CD8-positive, alpha-beta T cell (primary cell): ENCODE measurements at regions of chr5 and their contacts with region 1.

Region 1: DNA sequence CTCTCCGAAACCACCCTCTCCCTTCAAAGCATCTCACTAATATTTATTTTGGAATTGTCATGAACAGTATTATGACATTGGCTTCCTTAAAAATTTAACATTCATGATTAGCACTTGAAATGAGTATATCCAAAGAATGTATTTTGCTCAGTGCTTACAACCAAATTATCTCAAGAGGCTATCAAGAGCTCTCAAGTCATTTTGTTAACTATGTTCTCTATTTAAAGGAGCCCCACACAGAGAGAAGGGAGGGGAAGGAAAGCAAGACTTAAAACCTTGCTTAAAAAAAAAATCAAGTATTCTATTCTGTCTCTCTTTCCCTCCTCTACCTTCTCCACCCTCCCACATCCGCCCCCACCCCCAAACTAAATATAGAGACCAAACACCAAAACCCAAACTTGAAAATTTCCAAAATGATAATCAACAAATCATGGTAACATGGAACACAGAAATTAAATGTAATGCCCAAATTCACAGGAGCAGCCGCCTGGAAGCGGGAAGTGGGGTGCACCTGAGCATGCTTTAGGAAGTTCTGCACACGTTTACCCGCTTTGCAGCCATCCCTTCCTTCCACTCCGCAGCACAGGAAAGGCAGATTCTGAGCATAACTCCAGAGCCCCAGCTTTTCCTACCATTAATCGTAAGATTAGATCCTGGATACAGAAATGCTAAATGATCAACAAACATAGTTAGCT is 66.9 kb downstream of the EBF1 start:
- DNase-seq: no peak
- ATAC-seq: no peak
- H3K4me3 ChIP-seq: no peak overlapping the region
- H3K4me3 Mint-ChIP-seq: no peak overlapping the region
- H3K27ac ChIP-seq: no peak overlapping the region
- H3K27ac Mint-ChIP-seq: no peak overlapping the region
- H3K4me1 ChIP-seq: no peaks in the 10 kb centered on the region
- H3K4me1 Mint-ChIP-seq: peaks cover 7% of the 10 kb centered on the region
- H3K27me3 ChIP-seq: no peaks in the 10 kb centered on the region
- H3K27me3 Mint-ChIP-seq: peaks cover 18% of the 10 kb centered on the region
- CTCF ChIP-seq: no peak

Region 2: DNA sequence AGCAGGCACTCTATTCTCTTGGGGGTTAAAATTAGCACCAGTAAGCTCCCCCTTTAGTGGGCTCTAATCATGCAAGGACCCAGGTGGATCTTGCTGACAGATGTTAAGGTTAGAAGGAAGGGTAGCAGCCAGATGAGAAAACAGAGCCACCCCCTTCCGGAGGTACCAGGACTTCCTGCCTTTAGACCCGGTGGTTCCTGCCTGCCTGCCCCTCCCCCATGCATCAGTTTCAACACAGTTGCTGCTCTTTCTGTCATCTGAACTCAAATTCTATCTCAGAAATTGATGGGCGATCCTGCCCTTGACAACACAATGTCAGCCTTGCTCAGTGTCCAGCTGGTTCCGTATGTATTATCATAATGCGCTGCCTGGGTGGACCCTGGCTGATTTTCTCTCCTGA is 220.4 kb before region 1 on chr5:
- CTCF ChIA-PET with region 1: no interaction called
- POLR2A ChIA-PET with region 1: no interaction called
- intact Hi-C with region 1: no loop called
- DNase-seq: peak; percentile 18 to 79 (median 50)
- ATAC-seq: peak; percentile 87
- H3K4me3 ChIP-seq: peak overlapping the region in 1 of 2 experiments; percentile 11
- H3K4me3 Mint-ChIP-seq: peak overlapping the region; percentile 61
- H3K27ac ChIP-seq: peak overlapping the region in 1 of 2 experiments; percentile 31
- H3K27ac Mint-ChIP-seq: peak overlapping the region; percentile 61
- H3K4me1 ChIP-seq: peaks cover 22% of the 10 kb centered on the region
- H3K4me1 Mint-ChIP-seq: peaks cover 43% of the 10 kb centered on the region
- H3K27me3 ChIP-seq: no peaks in the 10 kb centered on the region
- H3K27me3 Mint-ChIP-seq: no peaks in the 10 kb centered on the region
- CTCF ChIP-seq: no peak

Region 3: DNA sequence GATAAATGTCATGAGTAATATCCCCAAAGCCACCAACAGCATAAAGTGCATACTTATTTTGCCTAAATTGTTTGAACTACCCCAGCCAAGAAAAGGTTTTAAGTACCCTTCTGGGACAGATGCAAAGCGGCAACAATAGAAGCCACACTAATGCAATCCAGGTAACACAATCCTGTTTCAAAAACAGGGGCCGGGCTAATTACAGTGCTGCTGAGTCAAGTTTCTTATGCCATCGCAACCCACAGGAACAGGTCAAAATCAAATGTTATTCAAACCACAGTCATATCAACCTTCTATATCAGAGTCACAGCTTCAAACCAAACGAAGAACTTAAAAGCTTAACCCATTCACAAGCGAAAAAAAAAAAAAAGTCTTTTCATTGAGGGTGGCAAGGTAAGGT is 38.6 kb after region 1 on chr5:
- CTCF ChIA-PET with region 1: no interaction called
- POLR2A ChIA-PET with region 1: no interaction called
- intact Hi-C with region 1: loop called in 1 of 2 experiments (anchors 1 kb)
- DNase-seq: no peak
- ATAC-seq: no peak
- H3K4me3 ChIP-seq: no peak overlapping the region
- H3K4me3 Mint-ChIP-seq: no peak overlapping the region
- H3K27ac ChIP-seq: no peak overlapping the region
- H3K27ac Mint-ChIP-seq: no peak overlapping the region
- H3K4me1 ChIP-seq: no peaks in the 10 kb centered on the region
- H3K4me1 Mint-ChIP-seq: peaks cover 5% of the 10 kb centered on the region
- H3K27me3 ChIP-seq: no peaks in the 10 kb centered on the region
- H3K27me3 Mint-ChIP-seq: peaks cover 10% of the 10 kb centered on the region
- CTCF ChIP-seq: no peak

Region 4: GRCh38 chr5:159341914-159342313 is 309.1 kb after region 1 on chr5:
- CTCF ChIA-PET with region 1: no interaction called
- POLR2A ChIA-PET with region 1: no interaction called
- intact Hi-C with region 1: no loop called
- DNase-seq: peak; percentile 28 to 91 (median 62)
- ATAC-seq: peak; percentile 74
- H3K4me3 ChIP-seq: no peak overlapping the region
- H3K4me3 Mint-ChIP-seq: no peak overlapping the region
- H3K27ac ChIP-seq: no peak overlapping the region
- H3K27ac Mint-ChIP-seq: peak overlapping the region; percentile 7
- H3K4me1 ChIP-seq: peaks cover 28% of the 10 kb centered on the region
- H3K4me1 Mint-ChIP-seq: peaks cover 42% of the 10 kb centered on the region
- H3K27me3 ChIP-seq: no peaks in the 10 kb centered on the region
- H3K27me3 Mint-ChIP-seq: no peaks in the 10 kb centered on the region
- CTCF ChIP-seq: no peak